ENCODE measurements at regions of chr19 and their contacts with region 1.

Region 1: DNA sequence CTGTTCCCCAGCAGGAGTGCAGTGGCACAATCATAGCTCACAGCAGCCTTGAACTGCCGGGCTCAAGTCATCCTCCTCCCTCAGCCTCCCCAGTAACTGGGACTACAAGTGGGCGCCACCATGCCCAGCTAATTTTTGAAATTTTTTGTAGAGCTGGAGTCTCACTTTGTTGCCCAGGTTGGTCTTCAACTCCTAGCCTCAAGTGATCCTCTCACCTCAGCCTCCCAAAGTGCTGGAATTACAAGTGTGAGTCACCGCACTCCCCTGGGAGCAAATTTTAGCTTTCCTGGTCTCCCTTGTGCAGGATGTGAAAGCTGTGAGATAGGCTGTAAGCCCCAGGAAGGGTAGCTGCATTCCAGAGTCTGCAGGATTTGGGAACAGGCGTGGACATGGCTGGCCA is 5.4 kb upstream of the GARRE1 start:
- DNase-seq: no peak
- CTCF ChIP-seq: no peak

Region 2: DNA sequence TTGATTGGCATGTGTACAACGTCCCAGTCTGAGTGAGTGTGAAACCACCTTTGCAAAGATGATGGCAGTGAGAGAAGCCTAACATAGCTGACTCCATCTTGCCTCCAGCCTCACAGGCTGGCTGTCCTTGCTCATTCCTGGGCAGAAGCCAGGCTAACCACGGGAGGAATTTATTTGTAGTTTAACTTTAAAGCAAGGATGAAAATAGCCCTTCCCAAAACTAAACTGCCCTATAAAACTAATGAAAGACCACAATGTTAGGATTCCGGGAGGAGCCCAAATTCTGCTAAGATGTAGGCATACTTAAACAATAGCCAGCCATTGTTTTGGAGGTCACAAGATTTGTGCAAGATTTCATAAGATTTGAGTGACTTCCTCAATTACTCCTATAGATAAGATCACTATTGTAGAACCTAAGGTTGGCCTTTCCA is 173.3 kb before region 1 on chr19:
- CTCF ChIA-PET with region 1: no interaction called
- POLR2A ChIA-PET with region 1: no interaction called
- DNase-seq: no peak
- CTCF ChIP-seq: no peak

Region 3: GRCh38 chr19:34260771-34261173 is 11.8 kb after region 1 on chr19:
- CTCF ChIA-PET with region 1: interaction called, 11 read pairs
- POLR2A ChIA-PET with region 1: interaction called, 3 read pairs
- DNase-seq: no peak
- CTCF ChIP-seq: no peak